B cell (primary cell): ENCODE measurements at regions of chr9 and their contacts with region 1.

Region 1: DNA sequence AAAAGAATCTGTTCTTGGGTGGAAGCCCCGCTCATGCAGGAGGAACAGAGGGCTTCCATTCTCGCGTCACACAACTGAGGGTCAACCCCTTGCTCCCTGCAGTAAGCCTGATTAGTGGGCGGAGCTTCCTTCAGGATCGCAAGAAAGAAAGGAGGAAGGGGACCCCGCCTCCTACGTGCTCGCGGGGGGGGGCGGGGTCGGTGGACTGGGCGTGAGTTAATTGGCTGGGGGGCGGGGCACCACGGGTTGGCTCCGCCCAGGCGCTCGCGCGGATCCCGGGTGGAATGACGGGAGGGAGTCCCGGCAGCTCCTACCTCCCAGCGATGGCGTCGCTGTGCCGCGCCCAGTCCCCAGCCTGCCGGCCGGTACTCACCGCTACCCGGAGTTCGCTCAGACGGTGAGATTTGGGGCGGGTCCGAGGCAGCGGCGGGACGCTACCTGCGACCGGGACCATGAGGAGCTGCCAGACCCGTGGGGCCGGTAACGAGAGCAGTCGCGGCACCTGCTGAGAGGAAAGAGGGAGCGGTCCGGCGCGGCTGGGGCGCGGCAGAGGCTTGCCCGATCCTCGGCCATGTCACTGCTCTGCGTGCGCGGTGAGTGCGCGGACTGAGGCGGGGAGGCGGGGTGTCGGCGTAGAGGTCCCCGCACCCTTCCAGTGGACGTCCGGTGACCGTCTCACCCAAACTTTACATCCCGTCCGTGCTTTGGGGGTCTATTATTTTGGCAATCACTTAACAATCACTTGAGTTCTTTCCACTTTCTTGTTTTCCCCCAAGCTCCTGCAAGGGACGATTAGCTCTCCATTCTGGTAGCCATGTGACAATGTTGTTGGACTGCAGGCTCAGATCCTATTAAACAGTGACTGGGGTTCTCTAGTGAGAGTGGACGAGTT is at the start of gene UNC13B:
- DNase-seq: peak; percentile 83
- ATAC-seq: peak; percentile 97
- H3K4me3 ChIP-seq: peak within 1 kb of the TSS; percentile 39 to 89 (median 78)
- H3K4me3 Mint-ChIP-seq: peak within 1 kb of the TSS; percentile 89
- H3K27ac ChIP-seq: no peak within 1 kb of the TSS
- H3K27ac Mint-ChIP-seq: peak within 1 kb of the TSS; percentile 61
- H3K4me1 ChIP-seq: peaks cover 16 to 30% of the 10 kb centered on the region in 2 donors
- H3K4me1 Mint-ChIP-seq: peaks cover 28% of the 10 kb centered on the region
- H3K27me3 ChIP-seq: peaks cover 0 to 9% (median 4%) of the 10 kb centered on the region in 4 experiments
- H3K27me3 Mint-ChIP-seq: peaks cover 6% of the 10 kb centered on the region
- CTCF ChIP-seq: no peak
- total RNA-seq, gene UNC13B: 0.25 and 0.32 TPM in 2 replicates

Region 2: DNA sequence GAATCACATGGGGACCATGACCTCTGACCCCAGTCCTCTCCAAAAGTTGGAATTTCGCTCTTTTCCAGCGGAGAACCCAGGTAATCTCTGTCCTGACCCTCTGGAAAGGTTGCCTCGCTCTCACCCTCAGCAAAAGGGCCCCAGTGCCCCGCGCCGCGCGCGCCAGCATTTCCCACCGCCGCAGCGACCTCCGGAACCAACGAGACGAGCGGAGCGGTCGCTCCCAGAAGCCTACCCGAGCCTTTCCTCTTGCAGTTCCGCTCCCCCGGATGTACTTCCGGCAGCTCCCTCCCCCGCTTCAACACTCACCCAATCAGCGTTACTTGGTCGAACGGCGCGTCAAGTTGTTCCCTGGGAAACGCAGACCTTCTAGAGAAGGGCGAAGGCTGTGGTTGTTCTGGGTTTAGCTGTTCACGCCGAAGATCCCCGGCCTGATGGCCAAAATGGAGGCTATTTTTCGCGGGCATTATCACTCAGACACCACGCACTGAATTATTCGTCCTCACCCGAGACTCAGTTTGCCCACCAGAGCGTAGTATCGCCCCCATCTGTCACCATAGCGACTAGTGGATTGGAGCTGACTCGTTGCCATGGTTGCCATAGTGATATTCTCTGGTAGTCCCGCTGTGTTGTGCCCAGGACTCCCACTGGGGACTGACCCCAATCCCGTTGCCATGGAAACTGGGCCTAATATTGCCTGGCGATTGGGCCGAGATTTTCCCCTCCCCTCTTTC is 58.9 kb before region 1 on chr9 and contains the start of gene STOML2:
- CTCF ChIA-PET with region 1: no interaction called
- POLR2A ChIA-PET with region 1: no interaction called
- intact Hi-C with region 1: loop called (anchors 2 kb)
- DNase-seq: peak; percentile 95
- ATAC-seq: peak; percentile 95
- H3K4me3 ChIP-seq: peak within 1 kb of the TSS; percentile 61 to 94 (median 88)
- H3K4me3 Mint-ChIP-seq: peak within 1 kb of the TSS; percentile 86
- H3K27ac ChIP-seq: peak within 1 kb of the TSS; percentile 86 to 96
- H3K27ac Mint-ChIP-seq: peak within 1 kb of the TSS; percentile 97
- H3K4me1 ChIP-seq: peaks cover 13 to 22% of the 10 kb centered on the region in 2 donors
- H3K4me1 Mint-ChIP-seq: peaks cover 28% of the 10 kb centered on the region
- H3K27me3 ChIP-seq: no peaks in the 10 kb centered on the region
- H3K27me3 Mint-ChIP-seq: no peaks in the 10 kb centered on the region
- CTCF ChIP-seq: no peak
- total RNA-seq, gene STOML2: 52.1 and 58.9 TPM in 2 replicates

Region 3: DNA sequence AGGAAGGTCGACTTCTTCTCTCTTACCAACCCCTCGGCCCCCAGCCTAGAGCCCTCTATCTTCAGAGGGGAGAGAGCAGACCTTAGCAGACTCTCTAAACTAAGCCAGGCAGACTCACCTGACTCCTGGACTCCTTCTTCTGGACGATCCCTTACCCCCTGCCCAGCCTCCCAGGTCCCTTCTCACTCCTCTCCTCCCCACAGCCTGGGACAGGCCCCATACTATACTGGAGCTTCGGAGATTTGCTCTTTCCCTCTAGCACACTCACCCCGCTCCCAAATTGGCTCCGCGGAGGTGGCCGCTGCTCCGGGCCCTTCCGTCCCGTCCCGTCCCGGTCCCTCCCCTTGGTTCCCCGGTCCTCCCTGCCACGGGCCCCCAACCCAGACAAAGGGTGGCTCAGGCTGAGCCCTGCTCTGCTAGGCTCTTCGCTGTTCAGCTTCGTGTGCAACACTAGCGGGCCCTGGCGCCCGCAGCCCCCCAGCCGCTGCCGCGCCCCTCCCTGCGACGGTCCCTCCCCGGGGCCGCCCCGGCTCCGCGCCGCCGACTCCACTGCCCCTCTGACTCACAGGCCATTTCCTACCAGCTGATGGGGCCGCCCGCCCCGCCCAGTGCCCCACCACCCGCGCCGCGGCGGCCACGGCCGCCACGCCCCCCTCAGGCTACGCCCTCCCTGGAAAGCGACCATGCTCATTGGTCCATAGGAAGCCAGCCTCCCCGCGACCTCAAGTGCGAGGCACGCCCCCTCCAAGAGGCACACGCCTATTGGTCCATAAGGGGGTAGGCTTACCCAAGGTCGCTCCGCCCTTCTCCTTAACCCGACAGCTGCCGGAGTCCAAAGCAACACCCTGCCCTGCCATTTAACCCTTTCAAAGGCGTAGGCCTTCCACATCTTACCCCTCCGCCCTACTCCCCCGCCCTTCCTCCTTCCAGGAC is 50.7 kb before region 1 on chr9:
- CTCF ChIA-PET with region 1: interaction called, 4 read pairs
- POLR2A ChIA-PET with region 1: no interaction called
- intact Hi-C with region 1: loop called (anchors 1 kb)
- DNase-seq: peak; percentile 96
- ATAC-seq: peak; percentile 77
- H3K4me3 ChIP-seq: peak overlapping the region; percentile 32 to 74 (median 59)
- H3K4me3 Mint-ChIP-seq: peak overlapping the region; percentile 88
- H3K27ac ChIP-seq: peak overlapping the region; percentile 80 to 83
- H3K27ac Mint-ChIP-seq: peak overlapping the region; percentile 93
- H3K4me1 ChIP-seq: peaks cover 33 to 45% of the 10 kb centered on the region in 2 donors
- H3K4me1 Mint-ChIP-seq: peaks cover 58% of the 10 kb centered on the region
- H3K27me3 ChIP-seq: no peaks in the 10 kb centered on the region
- H3K27me3 Mint-ChIP-seq: no peaks in the 10 kb centered on the region
- CTCF ChIP-seq: no peak

Region 4: GRCh38 chr9:35277628-35278359 is 115.8 kb after region 1 on chr9:
- CTCF ChIA-PET with region 1: no interaction called
- POLR2A ChIA-PET with region 1: no interaction called
- intact Hi-C with region 1: no loop called
- DNase-seq: no peak
- ATAC-seq: no peak
- H3K4me3 ChIP-seq: no peak overlapping the region
- H3K4me3 Mint-ChIP-seq: no peak overlapping the region
- H3K27ac ChIP-seq: no peak overlapping the region
- H3K27ac Mint-ChIP-seq: no peak overlapping the region
- H3K4me1 ChIP-seq: peaks cover 0 to 3% of the 10 kb centered on the region in 2 donors
- H3K4me1 Mint-ChIP-seq: peaks cover 7% of the 10 kb centered on the region
- H3K27me3 ChIP-seq: no peaks in the 10 kb centered on the region
- H3K27me3 Mint-ChIP-seq: peaks cover 13% of the 10 kb centered on the region
- CTCF ChIP-seq: no peak

Region 5: GRCh38 chr9:35350827-35351549 is 189.0 kb after region 1 on chr9:
- CTCF ChIA-PET with region 1: no interaction called
- POLR2A ChIA-PET with region 1: no interaction called
- intact Hi-C with region 1: no loop called
- DNase-seq: no peak
- ATAC-seq: no peak
- H3K4me3 ChIP-seq: no peak overlapping the region
- H3K4me3 Mint-ChIP-seq: no peak overlapping the region
- H3K27ac ChIP-seq: no peak overlapping the region
- H3K27ac Mint-ChIP-seq: no peak overlapping the region
- H3K4me1 ChIP-seq: no peaks in the 10 kb centered on the region
- H3K4me1 Mint-ChIP-seq: no peaks in the 10 kb centered on the region
- H3K27me3 ChIP-seq: no peaks in the 10 kb centered on the region
- H3K27me3 Mint-ChIP-seq: peaks cover 8% of the 10 kb centered on the region
- CTCF ChIP-seq: no peak

Region 6: DNA sequence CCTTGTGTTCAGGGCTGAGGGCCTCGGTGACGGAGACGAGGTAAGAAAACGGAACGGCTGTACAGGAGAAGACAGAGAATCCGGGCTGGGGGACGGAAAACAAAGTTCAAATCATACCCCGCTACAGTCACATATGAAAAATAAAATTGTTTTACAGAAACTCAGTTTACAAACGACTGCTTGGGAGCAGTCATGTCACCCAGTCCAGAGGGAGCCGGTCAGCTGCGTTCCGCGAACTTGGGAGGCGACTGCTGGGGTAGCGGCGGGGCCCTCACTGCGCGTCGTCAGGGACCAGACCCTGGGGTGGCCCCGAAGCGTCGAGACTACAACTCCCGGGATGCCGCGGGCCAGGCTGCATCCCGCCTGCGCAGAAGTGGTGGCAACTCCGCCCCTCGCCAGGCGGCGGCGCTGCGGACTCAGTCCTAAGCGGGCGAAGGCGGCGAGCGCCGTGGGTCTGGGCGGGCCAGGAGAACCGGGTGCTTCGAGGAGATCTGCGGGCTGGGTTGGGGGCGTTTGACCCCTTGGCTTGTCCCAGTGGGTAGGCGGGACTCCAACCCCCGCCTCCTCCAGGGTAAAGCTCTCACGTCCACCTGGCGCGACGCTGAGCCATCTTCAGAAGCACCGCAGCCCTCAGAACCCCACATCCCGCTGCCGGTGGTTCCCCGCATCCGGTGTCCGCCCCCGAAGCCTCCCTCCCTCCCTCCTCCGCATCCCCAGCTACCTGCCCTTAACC is 484.7 kb after region 1 on chr9:
- CTCF ChIA-PET with region 1: no interaction called
- POLR2A ChIA-PET with region 1: no interaction called
- intact Hi-C with region 1: no loop called
- DNase-seq: peak; percentile 95
- ATAC-seq: peak; percentile 89
- H3K4me3 ChIP-seq: peak overlapping the region; percentile 76 to 90 (median 84)
- H3K4me3 Mint-ChIP-seq: peak overlapping the region; percentile 97
- H3K27ac ChIP-seq: peak overlapping the region; percentile 88 to 95
- H3K27ac Mint-ChIP-seq: peak overlapping the region; percentile 97
- H3K4me1 ChIP-seq: peaks cover 76 to 92% of the 10 kb centered on the region in 2 donors
- H3K4me1 Mint-ChIP-seq: peaks cover 81% of the 10 kb centered on the region
- H3K27me3 ChIP-seq: no peaks in the 10 kb centered on the region
- H3K27me3 Mint-ChIP-seq: no peaks in the 10 kb centered on the region
- CTCF ChIP-seq: peak; percentile 94